ENCODE measurements at regions of chr5 and their contacts with region 1.

Region 1: GRCh38 chr5:144170276-144171024 is at the starts of genes KCTD16 and YIPF5:
- DNase-seq: peak; percentile 98
- ATAC-seq: peak; percentile 98
- H3K4me3 ChIP-seq: peak within 1 kb of the TSS; percentile 69 to 92 (median 71)
- H3K4me3 Mint-ChIP-seq: peak within 1 kb of the TSS; percentile 93
- H3K27ac ChIP-seq: peak within 1 kb of the TSS; percentile 61 to 85
- H3K27ac Mint-ChIP-seq: peak within 1 kb of the TSS; percentile 97
- H3K4me1 ChIP-seq: peaks cover 13 to 15% of the 10 kb centered on the region in 2 donors
- H3K4me1 Mint-ChIP-seq: peaks cover 30% of the 10 kb centered on the region
- H3K27me3 ChIP-seq: no peaks in the 10 kb centered on the region
- H3K27me3 Mint-ChIP-seq: peaks cover 6% of the 10 kb centered on the region
- CTCF ChIP-seq: no peak
- total RNA-seq, gene KCTD16: 0.17 TPM in 1 of 2 replicates, not detected in the other
- total RNA-seq, gene YIPF5: 24.0 and 24.3 TPM in 2 replicates

Region 2: GRCh38 chr5:143812085-143812705 is 358.3 kb before region 1 on chr5 and contains the start of gene HMHB1:
- CTCF ChIA-PET with region 1: no interaction called
- POLR2A ChIA-PET with region 1: no interaction called
- intact Hi-C with region 1: no loop called
- DNase-seq: no peak
- ATAC-seq: no peak
- H3K4me3 ChIP-seq: peak within 1 kb of the TSS in 4 of 5 experiments; percentile 12 to 46 (median 20)
- H3K4me3 Mint-ChIP-seq: peak within 1 kb of the TSS; percentile 77
- H3K27ac ChIP-seq: no peak within 1 kb of the TSS
- H3K27ac Mint-ChIP-seq: no peak within 1 kb of the TSS
- H3K4me1 ChIP-seq: peaks cover 11% of the 10 kb centered on the region in 2 donors
- H3K4me1 Mint-ChIP-seq: peaks cover 21% of the 10 kb centered on the region
- H3K27me3 ChIP-seq: peaks cover 0 to 4% (median 0%) of the 10 kb centered on the region in 4 experiments
- H3K27me3 Mint-ChIP-seq: no peaks in the 10 kb centered on the region
- CTCF ChIP-seq: no peak
- total RNA-seq, gene HMHB1: not detected in 2 replicates

Region 3: GRCh38 chr5:143882520-143882919 is 287.9 kb before region 1 on chr5:
- CTCF ChIA-PET with region 1: no interaction called
- POLR2A ChIA-PET with region 1: no interaction called
- intact Hi-C with region 1: no loop called
- DNase-seq: no peak
- ATAC-seq: no peak
- H3K4me3 ChIP-seq: no peak overlapping the region
- H3K4me3 Mint-ChIP-seq: no peak overlapping the region
- H3K27ac ChIP-seq: no peak overlapping the region
- H3K27ac Mint-ChIP-seq: no peak overlapping the region
- H3K4me1 ChIP-seq: no peaks in the 10 kb centered on the region
- H3K4me1 Mint-ChIP-seq: no peaks in the 10 kb centered on the region
- H3K27me3 ChIP-seq: no peaks in the 10 kb centered on the region
- H3K27me3 Mint-ChIP-seq: peaks cover 3% of the 10 kb centered on the region
- CTCF ChIP-seq: no peak

Region 4: DNA sequence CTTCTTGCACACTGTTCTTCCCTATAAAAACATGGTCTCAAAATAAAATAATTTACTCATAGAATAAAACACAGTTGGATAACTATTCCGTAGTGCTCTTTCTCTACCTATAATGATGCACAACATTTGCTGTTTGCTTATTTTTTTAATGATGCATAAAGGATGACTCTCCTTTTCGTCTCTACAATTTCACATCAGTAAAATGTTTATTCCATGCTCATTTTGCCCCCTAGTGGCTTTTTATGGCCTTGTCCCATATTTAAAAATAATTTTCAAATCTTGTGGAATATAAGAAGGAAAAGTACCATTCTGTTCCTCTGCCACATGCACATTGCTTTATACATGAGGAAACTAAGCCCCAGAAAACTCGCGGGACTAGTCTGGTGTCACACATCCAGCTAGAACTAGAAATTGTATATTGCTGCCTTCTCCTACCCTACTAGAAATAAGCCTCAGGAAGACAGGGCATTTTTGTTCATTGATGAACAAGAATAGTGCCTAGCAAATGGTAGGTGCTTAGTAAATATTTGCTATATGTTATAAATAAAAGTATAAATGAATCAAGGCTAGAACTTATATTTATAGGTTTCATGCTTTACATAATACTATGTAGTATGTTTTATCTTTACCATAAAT is 12.9 kb after region 1 on chr5:
- CTCF ChIA-PET with region 1: interaction called, 48 read pairs
- POLR2A ChIA-PET with region 1: interaction called, 3 read pairs
- intact Hi-C with region 1: loop called (anchors 1 kb)
- DNase-seq: peak; percentile 41
- ATAC-seq: no peak
- H3K4me3 ChIP-seq: no peak overlapping the region
- H3K4me3 Mint-ChIP-seq: no peak overlapping the region
- H3K27ac ChIP-seq: no peak overlapping the region
- H3K27ac Mint-ChIP-seq: no peak overlapping the region
- H3K4me1 ChIP-seq: peaks cover 16 to 19% of the 10 kb centered on the region in 2 donors
- H3K4me1 Mint-ChIP-seq: peaks cover 20% of the 10 kb centered on the region
- H3K27me3 ChIP-seq: no peaks in the 10 kb centered on the region
- H3K27me3 Mint-ChIP-seq: no peaks in the 10 kb centered on the region
- CTCF ChIP-seq: peak; percentile 87

Region 5: DNA sequence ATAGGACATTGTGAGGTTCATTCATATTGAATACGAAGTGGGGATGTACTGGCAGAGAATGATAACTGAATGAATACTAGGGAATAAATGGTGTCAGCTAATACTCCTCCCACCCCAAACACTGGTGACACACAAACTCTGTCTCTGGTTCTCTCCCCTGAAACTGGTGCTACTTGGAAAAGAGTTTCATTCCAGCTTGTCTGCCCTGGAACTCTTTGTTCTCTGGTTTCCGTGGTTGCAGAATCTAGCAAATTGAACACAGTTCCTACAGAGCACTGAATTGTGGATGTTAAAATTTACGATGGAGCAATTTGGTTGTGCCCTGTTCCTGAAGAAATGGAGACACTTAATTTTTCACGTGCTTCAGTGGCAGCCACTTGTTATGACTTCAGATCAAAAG is 181.9 kb after region 1 on chr5:
- CTCF ChIA-PET with region 1: no interaction called
- POLR2A ChIA-PET with region 1: no interaction called
- intact Hi-C with region 1: no loop called
- DNase-seq: no peak
- ATAC-seq: no peak
- H3K4me3 ChIP-seq: no peak overlapping the region
- H3K4me3 Mint-ChIP-seq: no peak overlapping the region
- H3K27ac ChIP-seq: no peak overlapping the region
- H3K27ac Mint-ChIP-seq: no peak overlapping the region
- H3K4me1 ChIP-seq: no peaks in the 10 kb centered on the region
- H3K4me1 Mint-ChIP-seq: no peaks in the 10 kb centered on the region
- H3K27me3 ChIP-seq: no peaks in the 10 kb centered on the region
- H3K27me3 Mint-ChIP-seq: no peaks in the 10 kb centered on the region
- CTCF ChIP-seq: no peak

Region 6: DNA sequence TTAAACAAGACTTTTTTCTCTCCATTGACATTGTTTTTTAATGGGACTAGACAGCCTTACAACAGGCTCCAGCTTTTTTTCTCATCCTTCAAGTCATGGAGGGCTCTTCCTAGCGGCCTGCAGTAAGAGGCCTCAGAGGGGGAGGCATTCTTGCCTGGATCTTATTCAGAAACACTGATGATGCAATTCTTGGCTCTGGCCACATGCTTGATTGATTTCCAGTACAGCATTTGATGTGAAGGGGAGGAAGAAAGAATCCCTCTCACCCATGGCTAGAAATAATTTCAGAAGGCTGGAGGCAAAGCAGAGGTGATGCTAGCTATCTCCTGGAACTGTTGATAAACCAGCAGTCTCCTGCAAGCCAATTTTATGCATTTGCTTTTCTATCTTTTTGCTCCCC is 1339.9 kb after region 1 on chr5:
- CTCF ChIA-PET with region 1: no interaction called
- POLR2A ChIA-PET with region 1: no interaction called
- intact Hi-C with region 1: no loop called
- DNase-seq: no peak
- ATAC-seq: no peak
- H3K4me3 ChIP-seq: no peak overlapping the region
- H3K4me3 Mint-ChIP-seq: no peak overlapping the region
- H3K27ac ChIP-seq: no peak overlapping the region
- H3K27ac Mint-ChIP-seq: no peak overlapping the region
- H3K4me1 ChIP-seq: no peaks in the 10 kb centered on the region
- H3K4me1 Mint-ChIP-seq: no peaks in the 10 kb centered on the region
- H3K27me3 ChIP-seq: no peaks in the 10 kb centered on the region
- H3K27me3 Mint-ChIP-seq: no peaks in the 10 kb centered on the region
- CTCF ChIP-seq: no peak

Measured in B cell (primary cell).